ENCODE measurements at regions of chr4 and their contacts with region 1.

Region 1: GRCh38 chr4:24551492-24552289 is 32.7 kb downstream of the DHX15 start:
- DNase-seq: no peak
- ATAC-seq: no peak
- H3K4me3 ChIP-seq: no peak overlapping the region
- H3K27ac ChIP-seq: no peak overlapping the region
- H3K4me1 ChIP-seq: no peaks in the 10 kb centered on the region
- H3K27me3 ChIP-seq: no peaks in the 10 kb centered on the region
- CTCF ChIP-seq: peak in 1 of 3 experiments; percentile 26; a peak in 1 of 6 replicates
- EP300 ChIP-seq: no peak
- POLR2A ChIP-seq: no peak
- RAD21 ChIP-seq: no peak

Region 2: DNA sequence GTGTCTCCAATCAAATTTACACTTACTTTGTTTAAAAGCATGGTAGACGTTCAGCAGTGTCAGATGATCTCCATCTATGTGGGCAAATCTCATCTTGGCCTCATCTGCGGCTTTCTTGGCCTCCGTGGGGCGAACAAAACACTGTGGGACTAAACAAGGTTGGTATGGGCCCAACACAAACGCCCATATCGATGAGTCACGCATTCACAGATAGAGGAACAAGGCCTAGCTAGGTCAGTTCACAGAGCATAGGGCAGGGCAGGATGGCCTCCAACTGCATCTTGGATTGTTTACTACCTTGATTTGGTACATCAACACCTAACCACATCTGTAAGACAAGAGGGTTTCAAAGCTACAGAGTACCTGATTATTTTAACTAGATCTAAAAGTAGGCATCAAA is 14.7 kb before region 1 on chr4:
- CTCF ChIA-PET with region 1: interaction called, 26 read pairs
- POLR2A ChIA-PET with region 1: interaction called, 3 read pairs
- RAD21 ChIA-PET with region 1: interaction called, 3 read pairs
- SMC1A ChIA-PET with region 1: interaction called, 10 read pairs
- in situ Hi-C with region 1: no loop called
- intact Hi-C with region 1: no loop called
- DNase-seq: no peak
- ATAC-seq: no peak
- H3K4me3 ChIP-seq: no peak overlapping the region
- H3K27ac ChIP-seq: no peak overlapping the region
- H3K4me1 ChIP-seq: no peaks in the 10 kb centered on the region
- H3K27me3 ChIP-seq: no peaks in the 10 kb centered on the region
- CTCF ChIP-seq: no peak
- EP300 ChIP-seq: no peak
- POLR2A ChIP-seq: no peak
- RAD21 ChIP-seq: no peak

Region 3: GRCh38 chr4:24570574-24571236 is 19.0 kb after region 1 on chr4:
- CTCF ChIA-PET with region 1: interaction called, 26 read pairs
- POLR2A ChIA-PET with region 1: interaction called, 7 read pairs
- RAD21 ChIA-PET with region 1: no interaction called
- SMC1A ChIA-PET with region 1: interaction called, 10 read pairs
- in situ Hi-C with region 1: no loop called
- intact Hi-C with region 1: no loop called
- DNase-seq: no peak
- ATAC-seq: peak; percentile 58
- H3K4me3 ChIP-seq: no peak overlapping the region
- H3K27ac ChIP-seq: no peak overlapping the region
- H3K4me1 ChIP-seq: peaks cover 3% of the 10 kb centered on the region
- H3K27me3 ChIP-seq: no peaks in the 10 kb centered on the region
- CTCF ChIP-seq: no peak
- EP300 ChIP-seq: no peak
- POLR2A ChIP-seq: no peak
- RAD21 ChIP-seq: no peak

Region 4: DNA sequence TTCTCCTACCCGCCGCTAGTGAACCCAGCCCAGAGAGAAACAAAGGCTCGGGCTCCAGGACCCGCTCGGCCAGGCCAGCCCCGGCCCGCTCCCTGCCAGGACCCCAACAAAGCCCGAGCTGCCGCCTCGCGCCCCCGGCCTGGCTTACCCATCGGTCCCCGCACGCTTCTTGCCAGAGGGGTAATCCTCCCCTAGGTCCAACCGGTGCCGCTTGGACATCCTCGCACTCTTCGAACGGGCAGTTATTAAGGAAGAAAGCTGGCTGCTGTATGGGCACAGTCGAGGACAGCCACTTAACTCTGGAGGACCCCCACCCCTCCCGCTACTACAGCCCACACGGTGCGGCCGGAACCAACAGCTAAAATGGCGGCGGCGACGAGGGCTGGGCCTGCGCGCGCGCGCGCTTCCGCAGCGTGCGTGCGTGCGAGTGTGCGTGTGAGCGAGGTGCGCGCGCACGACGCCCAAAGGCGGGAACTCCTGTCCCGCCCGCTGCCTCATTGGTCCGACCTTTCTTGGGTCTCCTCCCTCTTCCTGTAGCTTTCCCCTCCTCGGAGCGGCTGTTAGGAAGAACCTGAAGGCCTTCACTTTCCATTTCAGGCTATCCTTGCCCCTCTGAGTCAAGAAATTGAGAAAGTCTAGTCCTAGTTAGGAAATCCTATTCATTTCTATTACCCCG is 32.6 kb after region 1 on chr4 and contains the start of gene DHX15:
- CTCF ChIA-PET with region 1: interaction called, 13 read pairs
- POLR2A ChIA-PET with region 1: interaction called, 3 read pairs
- RAD21 ChIA-PET with region 1: no interaction called
- SMC1A ChIA-PET with region 1: interaction called, 5 read pairs
- in situ Hi-C with region 1: no loop called
- intact Hi-C with region 1: no loop called
- DNase-seq: peak; percentile 86
- ATAC-seq: peak; percentile 88
- H3K4me3 ChIP-seq: peak within 1 kb of the TSS; percentile 70
- H3K27ac ChIP-seq: peak within 1 kb of the TSS; percentile 89
- H3K4me1 ChIP-seq: peaks cover 12% of the 10 kb centered on the region
- H3K27me3 ChIP-seq: no peaks in the 10 kb centered on the region
- CTCF ChIP-seq: no peak
- EP300 ChIP-seq: no peak
- POLR2A ChIP-seq: peak; percentile 93
- RAD21 ChIP-seq: no peak
- polyA plus RNA-seq, gene DHX15: 177 to 181 TPM

Region 5: DNA sequence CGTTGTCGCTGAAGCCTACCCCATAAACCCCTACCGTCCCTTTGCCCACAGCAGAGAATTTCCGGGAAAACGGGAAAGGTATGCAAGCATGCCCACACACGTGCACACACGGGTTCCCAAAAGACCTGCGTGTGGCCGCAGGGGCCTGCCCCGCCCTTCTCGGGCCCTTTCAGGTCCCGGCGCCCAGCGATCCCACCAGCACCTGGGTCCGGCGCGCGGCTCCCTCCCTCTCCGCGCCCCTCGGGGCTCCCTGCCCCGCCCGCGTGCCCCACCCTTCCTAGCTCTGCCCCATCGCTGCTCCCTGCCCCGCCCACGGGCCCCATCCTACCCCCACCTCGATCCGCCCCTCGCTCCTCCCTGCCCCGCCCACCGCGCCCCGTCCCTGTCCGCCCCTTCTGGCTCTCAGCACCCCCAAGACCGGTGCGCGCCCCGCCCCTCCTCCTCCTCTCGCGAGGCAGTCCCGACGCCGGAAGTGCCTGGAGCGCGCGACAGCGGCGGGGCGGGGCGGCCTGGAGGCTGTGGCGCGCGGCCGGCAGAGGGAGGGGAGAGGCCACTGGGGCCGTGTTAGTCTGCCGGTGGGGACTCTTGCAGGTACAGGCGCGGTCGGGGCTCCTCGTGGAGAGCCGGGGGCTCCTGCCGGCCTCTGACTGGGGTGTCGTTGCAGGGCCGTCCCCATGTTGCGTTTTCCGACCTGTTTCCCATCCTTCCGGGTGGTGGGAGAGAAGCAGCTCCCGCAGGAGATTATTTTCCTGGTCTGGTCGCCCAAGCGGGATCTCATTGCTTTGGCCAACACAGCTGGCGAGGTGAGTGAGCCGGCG is 825.3 kb after region 1 on chr4 and contains the start of gene ANAPC4:
- CTCF ChIA-PET with region 1: no interaction called
- POLR2A ChIA-PET with region 1: no interaction called
- RAD21 ChIA-PET with region 1: no interaction called
- SMC1A ChIA-PET with region 1: no interaction called
- in situ Hi-C with region 1: loop called (anchors 25 kb)
- intact Hi-C with region 1: no loop called
- DNase-seq: peak; percentile 69
- ATAC-seq: peak; percentile 97
- H3K4me3 ChIP-seq: peak within 1 kb of the TSS; percentile 96
- H3K27ac ChIP-seq: peak within 1 kb of the TSS; percentile 55
- H3K4me1 ChIP-seq: no peaks in the 10 kb centered on the region
- H3K27me3 ChIP-seq: no peaks in the 10 kb centered on the region
- CTCF ChIP-seq: no peak
- EP300 ChIP-seq: no peak
- POLR2A ChIP-seq: peak; percentile 97
- RAD21 ChIP-seq: no peak
- polyA plus RNA-seq, gene ANAPC4: 16.3 to 17.0 TPM

Measured in GM12878 (cell line).